Caco-2 (cell line): ENCODE measurements at regions of chr14 and their contacts with region 1.

Region 1: DNA sequence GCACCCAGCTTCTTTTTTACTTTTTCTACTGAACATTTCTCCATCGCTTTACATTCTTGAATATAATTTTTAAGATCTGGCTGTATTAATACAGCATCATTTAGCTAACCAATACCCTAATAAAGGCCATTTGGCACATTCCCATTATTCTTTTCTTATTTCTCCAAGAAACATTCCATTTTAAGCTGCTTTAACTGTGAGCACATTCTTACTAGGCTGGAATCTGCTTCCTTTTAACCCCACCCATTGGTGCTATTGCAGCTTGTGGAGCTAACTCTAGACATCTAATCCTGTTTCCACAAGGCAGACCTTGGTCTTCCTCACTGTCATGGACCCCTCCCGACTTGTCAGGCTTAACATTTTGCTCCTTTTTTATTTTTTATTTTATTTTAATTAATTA is 15.2 kb downstream of the CALM1 start:
- DNase-seq: no peak
- H3K4me3 ChIP-seq: no peak overlapping the region
- H3K4me3 Mint-ChIP-seq: no peak overlapping the region
- H3K27ac Mint-ChIP-seq: no peak overlapping the region
- H3K4me1 ChIP-seq: no peaks in the 10 kb centered on the region
- H3K4me1 Mint-ChIP-seq: no peaks in the 10 kb centered on the region
- H3K27me3 ChIP-seq: no peaks in the 10 kb centered on the region
- H3K27me3 Mint-ChIP-seq: no peaks in the 10 kb centered on the region
- CTCF ChIP-seq: no peak

Region 2: GRCh38 chr14:90319173-90319572 is 92.9 kb before region 1 on chr14:
- CTCF ChIA-PET with region 1: interaction called, 14 read pairs
- POLR2A ChIA-PET with region 1: no interaction called
- intact Hi-C with region 1: no loop called
- DNase-seq: no peak
- H3K4me3 ChIP-seq: no peak overlapping the region
- H3K4me3 Mint-ChIP-seq: no peak overlapping the region
- H3K27ac Mint-ChIP-seq: no peak overlapping the region
- H3K4me1 ChIP-seq: no peaks in the 10 kb centered on the region
- H3K4me1 Mint-ChIP-seq: no peaks in the 10 kb centered on the region
- H3K27me3 ChIP-seq: no peaks in the 10 kb centered on the region
- H3K27me3 Mint-ChIP-seq: no peaks in the 10 kb centered on the region
- CTCF ChIP-seq: no peak